ENCODE measurements at regions of chr17 and their contacts with region 1.

Region 1: GRCh38 chr17:50484371-50485155 is 5.9 kb downstream of the RSAD1 start:
- DNase-seq: no peak
- ATAC-seq: no peak
- H3K4me3 ChIP-seq: no peak overlapping the region
- H3K4me3 Mint-ChIP-seq: no peak overlapping the region
- H3K27ac ChIP-seq: no peak overlapping the region
- H3K27ac Mint-ChIP-seq: no peak overlapping the region
- H3K4me1 ChIP-seq: peaks cover 6 to 7% of the 10 kb centered on the region in 2 donors
- H3K4me1 Mint-ChIP-seq: peaks cover 14% of the 10 kb centered on the region
- H3K27me3 ChIP-seq: no peaks in the 10 kb centered on the region
- H3K27me3 Mint-ChIP-seq: no peaks in the 10 kb centered on the region
- CTCF ChIP-seq: no peak

Region 2: GRCh38 chr17:50184064-50184463 is 300.5 kb before region 1 on chr17:
- CTCF ChIA-PET with region 1: no interaction called
- POLR2A ChIA-PET with region 1: no interaction called
- intact Hi-C with region 1: no loop called
- DNase-seq: no peak
- ATAC-seq: no peak
- H3K4me3 ChIP-seq: peak overlapping the region in 2 of 5 experiments; percentile 0 to 16
- H3K4me3 Mint-ChIP-seq: peak overlapping the region; percentile 56
- H3K27ac ChIP-seq: no peak overlapping the region
- H3K27ac Mint-ChIP-seq: peak overlapping the region; percentile 53
- H3K4me1 ChIP-seq: peaks cover 27 to 31% of the 10 kb centered on the region in 2 donors
- H3K4me1 Mint-ChIP-seq: peaks cover 40% of the 10 kb centered on the region
- H3K27me3 ChIP-seq: no peaks in the 10 kb centered on the region
- H3K27me3 Mint-ChIP-seq: no peaks in the 10 kb centered on the region
- CTCF ChIP-seq: peak; percentile 33

Region 3: DNA sequence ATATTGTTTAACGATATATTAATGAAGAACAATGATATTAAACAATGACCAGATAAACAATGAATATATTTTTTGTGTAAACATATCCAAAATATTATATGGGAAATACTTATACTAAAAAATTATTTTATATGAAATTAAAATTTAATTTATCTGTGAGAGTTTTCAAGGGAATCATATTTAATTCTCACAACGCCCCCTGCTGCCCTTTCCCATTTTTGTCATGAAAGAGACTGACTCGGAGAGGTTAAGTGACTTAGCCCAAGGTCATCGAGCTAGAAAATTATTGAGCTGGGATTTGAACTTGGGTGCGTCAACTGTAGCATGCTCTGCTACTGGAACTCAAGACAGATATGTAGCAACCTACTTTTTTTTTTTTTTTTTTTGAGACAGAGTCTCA is 16.5 kb after region 1 on chr17:
- CTCF ChIA-PET with region 1: interaction called, 10 read pairs
- POLR2A ChIA-PET with region 1: no interaction called
- intact Hi-C with region 1: loop called (anchors 2 kb)
- DNase-seq: peak; percentile 34
- ATAC-seq: no peak
- H3K4me3 ChIP-seq: no peak overlapping the region
- H3K4me3 Mint-ChIP-seq: no peak overlapping the region
- H3K27ac ChIP-seq: no peak overlapping the region
- H3K27ac Mint-ChIP-seq: no peak overlapping the region
- H3K4me1 ChIP-seq: no peaks in the 10 kb centered on the region
- H3K4me1 Mint-ChIP-seq: no peaks in the 10 kb centered on the region
- H3K27me3 ChIP-seq: peaks cover 0 to 2% (median 0%) of the 10 kb centered on the region in 4 experiments
- H3K27me3 Mint-ChIP-seq: peaks cover 3% of the 10 kb centered on the region
- CTCF ChIP-seq: peak; percentile 62

Measured in B cell (primary cell).